ENCODE measurements at regions of chr3 and their contacts with region 1.

Region 1: DNA sequence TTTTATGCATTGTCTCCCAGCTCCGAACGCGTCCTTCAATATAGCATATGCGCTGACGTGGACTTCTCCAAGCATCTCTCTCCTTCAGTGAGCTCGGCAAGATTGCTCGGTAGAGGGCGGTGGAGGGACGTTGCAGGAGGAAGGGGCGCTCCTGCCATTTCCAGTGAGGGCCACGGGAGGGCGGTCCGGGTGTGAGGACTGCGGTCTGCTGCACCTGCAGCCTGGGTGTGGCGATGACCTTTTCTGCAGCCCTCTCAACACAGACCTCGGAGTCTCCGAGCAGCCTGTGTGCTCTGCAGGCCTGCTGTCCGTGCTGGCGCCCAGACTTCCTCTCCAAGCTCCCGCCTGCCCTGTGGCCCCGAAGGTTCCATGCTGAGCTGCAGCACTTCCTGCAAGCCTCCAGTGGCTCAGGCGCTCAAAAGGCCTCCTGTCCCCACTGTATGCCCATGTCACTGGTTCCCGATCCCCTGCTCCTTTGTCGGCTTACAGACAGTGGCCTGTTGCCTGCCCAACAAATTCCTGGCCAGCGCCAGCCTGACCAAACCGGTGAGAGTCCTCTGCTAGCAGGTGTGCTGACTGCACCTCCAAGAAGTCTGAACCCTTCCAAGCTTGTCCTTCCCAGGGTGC is 8.9 kb upstream of the RTP3 start:
- DNase-seq: peak; percentile 87
- ATAC-seq: peak; percentile 92
- H3K4me3 ChIP-seq: no peak overlapping the region
- H3K27ac ChIP-seq: peak overlapping the region; percentile 74
- H3K4me1 ChIP-seq: peaks cover 15% of the 10 kb centered on the region
- H3K27me3 ChIP-seq: no peaks in the 10 kb centered on the region
- CTCF ChIP-seq: peak; percentile 100
- POLR2A ChIP-seq: no peak; the same call in 1 of the 2 replicates
- RAD21 ChIP-seq: peak; percentile 100

Region 2: DNA sequence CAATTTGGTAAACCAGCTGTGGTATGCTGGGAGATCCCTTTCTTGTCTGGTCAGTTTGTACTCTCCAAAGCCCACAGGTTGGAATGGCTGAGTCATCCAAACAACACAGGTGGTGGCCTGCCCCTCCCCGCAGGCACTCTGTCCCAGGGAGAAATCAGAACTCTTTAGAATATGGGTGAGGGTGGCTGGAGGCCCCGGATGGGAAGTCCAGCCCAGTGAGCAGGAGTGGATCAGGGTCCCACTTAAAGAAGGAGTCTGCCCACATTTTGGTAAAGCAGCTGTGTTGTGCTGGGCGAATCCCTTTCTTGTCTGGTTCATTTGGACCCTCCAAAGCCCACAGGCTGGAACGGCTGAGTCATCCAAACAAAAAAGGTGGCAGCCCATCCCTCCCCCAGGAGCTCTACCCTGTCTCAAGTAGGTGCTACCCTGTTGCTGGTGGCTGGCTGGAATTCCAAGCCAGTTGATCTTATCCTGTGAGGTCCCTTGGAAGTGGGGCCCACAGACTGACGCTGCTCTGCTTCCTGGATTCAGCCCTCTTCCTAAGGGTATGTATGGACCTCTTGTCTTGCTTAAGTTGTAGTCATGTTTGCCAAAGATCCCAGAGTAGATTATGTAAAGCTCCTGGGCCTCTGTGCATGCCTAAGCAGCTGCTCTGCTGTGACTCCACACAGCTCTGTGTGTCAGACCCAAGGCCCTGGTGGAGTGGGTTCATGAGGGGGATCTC is 325.4 kb before region 1 on chr3:
- CTCF ChIA-PET with region 1: no interaction called
- POLR2A ChIA-PET with region 1: no interaction called
- dilution Hi-C with region 1: no loop called
- in situ Hi-C with region 1: no loop called
- intact Hi-C with region 1: no loop called
- DNase-seq: no peak
- ATAC-seq: peak; percentile 32
- H3K4me3 ChIP-seq: no peak overlapping the region
- H3K27ac ChIP-seq: no peak overlapping the region
- H3K4me1 ChIP-seq: no peaks in the 10 kb centered on the region
- H3K27me3 ChIP-seq: peaks cover 5% of the 10 kb centered on the region
- CTCF ChIP-seq: no peak
- POLR2A ChIP-seq: no peak
- RAD21 ChIP-seq: no peak

Region 3: GRCh38 chr3:46423588-46423987 is 65.3 kb before region 1 on chr3:
- CTCF ChIA-PET with region 1: no interaction called
- POLR2A ChIA-PET with region 1: no interaction called
- dilution Hi-C with region 1: no loop called
- in situ Hi-C with region 1: no loop called
- intact Hi-C with region 1: no loop called
- DNase-seq: peak; percentile 34
- ATAC-seq: no peak
- H3K4me3 ChIP-seq: no peak overlapping the region
- H3K27ac ChIP-seq: no peak overlapping the region
- H3K4me1 ChIP-seq: no peaks in the 10 kb centered on the region
- H3K27me3 ChIP-seq: peaks cover 13% of the 10 kb centered on the region
- CTCF ChIP-seq: no peak
- POLR2A ChIP-seq: no peak
- RAD21 ChIP-seq: no peak

Region 4: GRCh38 chr3:46558184-46559043 is 69.6 kb after region 1 on chr3:
- CTCF ChIA-PET with region 1: interaction called, 33 read pairs
- POLR2A ChIA-PET with region 1: no interaction called
- dilution Hi-C with region 1: no loop called
- in situ Hi-C with region 1: no loop called
- intact Hi-C with region 1: loop called (anchors 1 kb)
- DNase-seq: peak; percentile 60
- ATAC-seq: peak; percentile 28
- H3K4me3 ChIP-seq: no peak overlapping the region
- H3K27ac ChIP-seq: peak overlapping the region; percentile 78
- H3K4me1 ChIP-seq: peaks cover 13% of the 10 kb centered on the region
- H3K27me3 ChIP-seq: no peaks in the 10 kb centered on the region
- CTCF ChIP-seq: peak; percentile 55
- POLR2A ChIP-seq: no peak
- RAD21 ChIP-seq: peak; percentile 66

Region 5: GRCh38 chr3:46629551-46630517 is 141.0 kb after region 1 on chr3:
- CTCF ChIA-PET with region 1: interaction called, 49 read pairs
- POLR2A ChIA-PET with region 1: interaction called, 13 read pairs
- dilution Hi-C with region 1: no loop called
- in situ Hi-C with region 1: loop called (anchors 5 kb)
- intact Hi-C with region 1: loop called (anchors 1 kb)
- DNase-seq: peak; percentile 76
- ATAC-seq: peak; percentile 82
- H3K4me3 ChIP-seq: no peak overlapping the region
- H3K27ac ChIP-seq: peak overlapping the region; percentile 24
- H3K4me1 ChIP-seq: peaks cover 24% of the 10 kb centered on the region
- H3K27me3 ChIP-seq: no peaks in the 10 kb centered on the region; the same call in 1 of the 2 replicates
- CTCF ChIP-seq: peak; percentile 99
- POLR2A ChIP-seq: no peak
- RAD21 ChIP-seq: peak; percentile 82

Region 6: DNA sequence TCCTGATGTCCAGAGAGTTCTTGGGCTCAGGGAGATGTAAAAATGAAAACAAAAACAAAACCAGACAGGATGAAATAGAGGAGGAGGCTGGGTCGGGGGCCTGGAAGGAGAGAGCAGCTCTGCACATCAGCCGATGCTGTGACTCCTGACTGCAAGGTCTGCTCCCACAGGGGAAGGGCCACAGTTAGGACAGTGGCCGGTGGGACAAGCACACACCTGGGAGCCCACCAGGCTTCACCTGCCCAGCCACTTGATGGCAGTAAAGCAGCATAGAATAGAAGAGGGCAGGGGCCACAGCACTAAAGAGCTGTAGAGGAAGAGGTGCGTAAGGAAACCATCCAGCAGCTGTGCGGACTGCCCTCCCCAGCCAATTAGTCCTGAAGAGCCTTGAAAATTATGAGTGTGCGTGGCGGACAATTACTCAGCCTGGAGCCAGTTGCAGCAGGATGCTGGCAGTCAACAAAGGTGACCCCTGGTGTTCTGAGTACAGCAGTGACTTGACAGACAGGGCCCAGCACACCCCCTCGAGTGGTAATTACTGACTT is 174.8 kb after region 1 on chr3:
- CTCF ChIA-PET with region 1: interaction called, 14 read pairs
- POLR2A ChIA-PET with region 1: no interaction called
- dilution Hi-C with region 1: no loop called
- in situ Hi-C with region 1: no loop called
- intact Hi-C with region 1: no loop called
- DNase-seq: peak; percentile 46
- ATAC-seq: 0 out of 2 replicates have a peak, but pooled peaks have one; percentile 2
- H3K4me3 ChIP-seq: no peak overlapping the region
- H3K27ac ChIP-seq: peak overlapping the region; percentile 27; the same call in 1 of the 2 replicates
- H3K4me1 ChIP-seq: peaks cover 27% of the 10 kb centered on the region
- H3K27me3 ChIP-seq: peaks cover 3% of the 10 kb centered on the region; the same call in 1 of the 2 replicates
- CTCF ChIP-seq: 0 out of 2 replicates have a peak, but pooled peaks have one; percentile 6
- POLR2A ChIP-seq: no peak
- RAD21 ChIP-seq: no peak

Region 7: DNA sequence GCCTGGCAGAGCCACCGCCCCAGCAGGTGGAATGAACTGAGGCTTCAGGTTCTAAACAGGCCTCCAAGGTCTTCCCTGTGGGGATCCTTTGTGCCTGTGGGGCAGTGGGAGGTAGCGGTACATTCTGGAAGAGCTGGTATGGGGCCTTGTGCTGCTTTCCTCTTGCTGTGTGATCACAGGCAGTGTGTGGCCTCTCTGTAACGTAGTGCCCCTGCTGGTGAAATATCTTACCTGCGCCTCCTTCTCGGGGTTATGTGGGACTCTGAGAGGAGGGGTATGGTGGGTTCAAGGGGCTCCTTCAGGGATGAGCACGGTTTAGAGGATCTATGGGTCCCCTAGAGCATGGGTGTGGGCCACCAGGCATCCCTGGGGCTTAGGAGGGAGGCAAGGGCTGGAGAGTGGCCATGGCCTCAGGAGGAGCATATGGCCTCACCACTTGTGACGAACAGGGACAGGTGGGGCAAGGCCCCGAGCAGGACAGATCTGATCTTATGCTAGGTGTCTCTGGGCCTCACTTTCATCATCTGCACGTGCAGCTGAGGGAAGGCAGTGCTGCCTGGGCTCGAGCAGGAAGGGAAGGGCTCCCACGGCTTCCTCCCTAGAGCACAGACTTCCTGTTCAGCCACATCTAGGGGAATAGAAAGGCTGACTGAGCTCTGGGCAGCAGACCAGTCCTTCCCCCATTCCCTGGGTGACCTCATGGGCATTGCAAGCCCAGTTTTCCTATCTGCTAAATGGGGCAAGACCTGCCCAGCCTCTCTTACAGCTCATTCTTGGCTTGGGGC is 206.5 kb after region 1 on chr3:
- CTCF ChIA-PET with region 1: interaction called, 14 read pairs
- POLR2A ChIA-PET with region 1: no interaction called
- dilution Hi-C with region 1: no loop called
- in situ Hi-C with region 1: no loop called
- intact Hi-C with region 1: loop called (anchors 2 kb)
- DNase-seq: no peak
- ATAC-seq: no peak
- H3K4me3 ChIP-seq: no peak overlapping the region
- H3K27ac ChIP-seq: no peak overlapping the region
- H3K4me1 ChIP-seq: peaks cover 20% of the 10 kb centered on the region
- H3K27me3 ChIP-seq: peaks cover 9% of the 10 kb centered on the region
- CTCF ChIP-seq: 0 out of 2 replicates have a peak, but pooled peaks have one; percentile 24
- POLR2A ChIP-seq: no peak
- RAD21 ChIP-seq: no peak

Region 8: DNA sequence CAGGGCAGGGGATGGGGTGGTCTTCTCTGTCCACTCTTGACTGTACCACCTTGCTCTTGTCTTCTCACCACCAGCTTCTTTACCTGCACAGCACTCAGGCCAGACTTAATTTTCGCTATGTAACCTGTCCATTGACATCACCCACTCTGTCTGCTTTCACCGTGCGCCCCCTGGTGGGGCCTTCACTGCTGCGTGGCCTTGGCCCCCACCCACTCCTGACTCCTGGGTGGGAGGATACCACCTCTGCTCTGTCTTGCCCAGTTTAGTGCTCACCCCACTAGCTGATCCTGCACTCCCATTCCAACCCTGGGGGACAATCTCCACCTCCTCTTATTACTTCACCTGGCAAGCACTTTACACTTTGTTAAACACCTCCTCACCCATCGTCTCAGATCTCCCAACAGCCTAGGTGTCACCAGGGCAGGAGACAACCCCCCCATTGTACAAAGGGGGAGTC is 406.4 kb after region 1 on chr3:
- CTCF ChIA-PET with region 1: no interaction called
- POLR2A ChIA-PET with region 1: no interaction called
- dilution Hi-C with region 1: no loop called
- in situ Hi-C with region 1: loop called (anchors 25 kb)
- intact Hi-C with region 1: no loop called
- DNase-seq: peak; percentile 34
- ATAC-seq: peak; percentile 52
- H3K4me3 ChIP-seq: no peak overlapping the region
- H3K27ac ChIP-seq: no peak overlapping the region
- H3K4me1 ChIP-seq: no peaks in the 10 kb centered on the region; the same call in 1 of the 2 replicates
- H3K27me3 ChIP-seq: peaks cover 29% of the 10 kb centered on the region
- CTCF ChIP-seq: peak; percentile 81
- POLR2A ChIP-seq: no peak
- RAD21 ChIP-seq: peak; percentile 80

Region 9: GRCh38 chr3:46909535-46910442 is 420.9 kb after region 1 on chr3:
- CTCF ChIA-PET with region 1: no interaction called
- POLR2A ChIA-PET with region 1: no interaction called
- dilution Hi-C with region 1: no loop called
- in situ Hi-C with region 1: no loop called
- intact Hi-C with region 1: loop called (anchors 5 kb)
- DNase-seq: peak; percentile 85
- ATAC-seq: peak; percentile 92
- H3K4me3 ChIP-seq: no peak overlapping the region
- H3K27ac ChIP-seq: no peak overlapping the region
- H3K4me1 ChIP-seq: peaks cover 9% of the 10 kb centered on the region; the same call in 1 of the 2 replicates
- H3K27me3 ChIP-seq: peaks cover 2% of the 10 kb centered on the region; the same call in 1 of the 2 replicates
- CTCF ChIP-seq: peak; percentile 98
- POLR2A ChIP-seq: peak; percentile 51; the same call in 1 of the 2 replicates
- RAD21 ChIP-seq: peak; percentile 90

Region 10: GRCh38 chr3:47070770-47071169 is 581.9 kb after region 1 on chr3:
- CTCF ChIA-PET with region 1: no interaction called
- POLR2A ChIA-PET with region 1: no interaction called
- dilution Hi-C with region 1: no loop called
- in situ Hi-C with region 1: no loop called
- intact Hi-C with region 1: no loop called
- DNase-seq: no peak
- ATAC-seq: no peak
- H3K4me3 ChIP-seq: no peak overlapping the region
- H3K27ac ChIP-seq: no peak overlapping the region
- H3K4me1 ChIP-seq: no peaks in the 10 kb centered on the region
- H3K27me3 ChIP-seq: no peaks in the 10 kb centered on the region
- CTCF ChIP-seq: no peak
- POLR2A ChIP-seq: no peak
- RAD21 ChIP-seq: no peak

Region 11: GRCh38 chr3:47082519-47082918 is 593.7 kb after region 1 on chr3:
- CTCF ChIA-PET with region 1: no interaction called
- POLR2A ChIA-PET with region 1: no interaction called
- dilution Hi-C with region 1: no loop called
- in situ Hi-C with region 1: no loop called
- intact Hi-C with region 1: no loop called
- DNase-seq: peak; percentile 89
- ATAC-seq: peak; percentile 94
- H3K4me3 ChIP-seq: no peak overlapping the region
- H3K27ac ChIP-seq: no peak overlapping the region
- H3K4me1 ChIP-seq: peaks cover 10% of the 10 kb centered on the region
- H3K27me3 ChIP-seq: no peaks in the 10 kb centered on the region
- CTCF ChIP-seq: no peak
- POLR2A ChIP-seq: no peak
- RAD21 ChIP-seq: 0 out of 2 replicates have a peak, but pooled peaks have one; percentile 1

Measured in IMR-90 (cell line).